Posterior vena cava (tissue), 2 donors: ENCODE measurements at regions of chr4 and their contacts with region 1.

Region 1: GRCh38 chr4:182938205-182938645 is 21.0 kb upstream of the DCTD start:
- DNase-seq: peak; percentile 92

Region 2: DNA sequence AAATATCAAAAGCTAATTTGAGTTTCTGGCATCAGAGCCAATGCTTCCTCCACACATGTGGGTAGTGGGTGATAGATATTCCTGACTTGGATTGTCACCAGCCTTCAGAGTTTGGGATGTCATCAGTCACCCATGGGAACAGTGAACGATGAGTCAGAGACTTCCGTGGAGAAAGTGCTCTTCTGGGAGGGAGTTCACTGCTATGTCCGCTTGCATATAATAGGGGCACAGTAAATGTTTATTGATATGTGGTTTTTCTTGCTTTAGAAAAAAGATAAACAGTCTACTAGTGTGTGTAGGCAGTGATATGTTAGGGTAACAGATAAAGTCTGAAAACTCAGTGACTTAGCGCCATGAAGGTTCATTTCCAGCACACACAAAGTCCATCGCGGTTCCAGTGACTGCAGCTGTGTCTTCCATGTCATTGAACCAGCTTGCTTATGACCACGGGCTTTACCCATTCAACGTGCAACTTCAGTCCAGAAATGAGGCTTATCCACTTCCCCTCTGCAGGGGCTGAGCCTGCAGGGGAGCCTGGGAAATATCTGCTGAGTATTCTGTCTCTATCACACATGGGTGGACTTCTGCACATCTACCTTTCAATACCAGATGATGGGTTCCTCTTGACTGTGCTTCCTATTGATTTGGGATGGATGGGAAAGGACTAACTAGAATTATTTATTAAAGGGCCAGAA is 73.1 kb after region 1 on chr4:
- intact Hi-C with region 1: no loop called
- DNase-seq: no peak

Region 3: GRCh38 chr4:183261953-183262775 is 323.9 kb after region 1 on chr4:
- intact Hi-C with region 1: loop called (anchors 5 kb)
- DNase-seq: peak; percentile 92